Activated CD8-positive, alpha-beta memory T cell treated with anti-CD3 and anti-CD28 coated beads, Interleukin-2, amount 10 ng/mL, durations not matched to agents 7 days and 5 days (primary cell): ENCODE measurements at regions of chr6 and their contacts with region 1.

Region 1: DNA sequence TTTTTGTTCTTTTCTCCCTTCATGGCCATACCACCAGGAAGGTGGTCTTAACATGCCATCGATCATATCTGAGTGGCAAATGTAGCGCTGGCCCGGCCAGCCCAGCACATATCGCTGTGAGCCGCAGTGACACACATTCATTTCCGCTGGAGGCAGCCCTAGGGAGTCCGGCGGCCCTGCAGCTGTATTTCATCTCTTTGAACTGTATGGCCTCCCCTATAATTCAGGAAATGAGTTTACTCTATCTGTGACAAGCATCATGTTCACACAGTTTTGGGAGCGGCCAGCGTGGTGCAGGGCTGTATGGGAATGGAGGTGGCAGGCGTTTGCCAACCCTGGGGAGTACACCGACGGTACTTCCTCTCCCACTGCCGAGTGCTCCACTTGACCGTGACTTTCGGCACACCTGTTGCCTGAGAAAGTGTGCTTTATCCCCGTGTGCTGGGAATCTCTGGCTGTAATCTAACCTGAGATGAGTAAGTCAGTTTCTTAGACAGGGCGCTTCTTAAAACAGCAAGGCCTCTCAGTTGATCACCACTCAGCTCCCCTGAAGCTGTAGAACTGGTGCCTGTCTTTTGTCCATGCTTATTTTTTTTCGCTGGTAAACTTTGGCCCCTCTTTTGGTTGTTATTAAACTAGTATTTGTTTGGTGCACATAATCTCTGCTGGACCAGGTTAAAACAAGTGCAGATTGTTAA is 257.1 kb upstream of the TAB2 start:
- DNase-seq: peak; percentile 83
- ATAC-seq: peak; percentile 87
- H3K4me3 Mint-ChIP-seq: peak overlapping the region; percentile 62
- H3K27ac Mint-ChIP-seq: peak overlapping the region; percentile 92
- H3K4me1 Mint-ChIP-seq: peaks cover 73% of the 10 kb centered on the region
- H3K27me3 Mint-ChIP-seq: no peaks in the 10 kb centered on the region

Region 2: GRCh38 chr6:149075616-149076364 is 15.3 kb after region 1 on chr6:
- CTCF ChIA-PET with region 1: interaction called, 19 read pairs
- DNase-seq: no peak
- ATAC-seq: peak; percentile 57
- H3K4me3 Mint-ChIP-seq: no peak overlapping the region
- H3K27ac Mint-ChIP-seq: peak overlapping the region; percentile 66
- H3K4me1 Mint-ChIP-seq: peaks cover 43% of the 10 kb centered on the region
- H3K27me3 Mint-ChIP-seq: no peaks in the 10 kb centered on the region